ENCODE measurements at regions of chr3 and their contacts with region 1.

Region 1: GRCh38 chr3:38843898-38844297 is 27.9 kb upstream of the SCN10A start:
- DNase-seq: peak; percentile 58
- ATAC-seq: peak; percentile 72
- H3K4me3 ChIP-seq: no peak overlapping the region
- H3K27ac ChIP-seq: no peak overlapping the region
- H3K4me1 ChIP-seq: no peaks in the 10 kb centered on the region
- H3K27me3 ChIP-seq: peaks cover 58% of the 10 kb centered on the region
- CTCF ChIP-seq: peak; percentile 64

Region 2: DNA sequence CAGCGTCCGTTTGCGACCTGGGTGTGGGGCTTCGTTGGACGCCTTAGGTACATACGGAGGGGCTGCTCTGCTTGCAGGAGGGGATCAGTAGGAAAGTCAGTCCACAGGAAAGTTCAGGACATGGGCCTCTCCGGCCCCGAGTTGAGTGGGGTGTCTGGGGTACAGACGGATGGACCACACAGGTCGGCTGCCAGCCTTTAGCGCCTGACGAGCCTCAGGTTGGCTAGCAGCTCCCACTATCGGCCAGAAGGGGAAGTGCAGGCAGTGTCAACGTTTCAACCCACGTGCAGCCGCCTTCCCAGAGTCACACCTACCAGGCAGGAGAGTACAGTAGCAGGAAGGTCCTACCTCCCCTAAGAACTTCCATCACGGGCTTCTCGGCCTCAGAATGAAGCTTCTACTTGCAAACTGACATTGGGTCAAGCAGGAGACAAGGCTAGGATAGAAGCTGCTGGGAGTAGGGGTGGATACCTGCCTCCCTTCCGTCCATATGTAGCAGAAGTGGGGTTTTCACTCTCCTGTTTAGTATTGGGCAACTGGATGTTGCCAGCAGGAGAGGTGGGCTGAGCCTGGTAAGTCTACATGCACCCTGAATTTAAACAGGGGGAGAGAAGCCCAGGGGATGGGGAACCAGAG is 192.6 kb before region 1 on chr3:
- CTCF ChIA-PET with region 1: no interaction called
- POLR2A ChIA-PET with region 1: no interaction called
- intact Hi-C with region 1: loop called (anchors 2 kb)
- DNase-seq: peak; percentile 70
- ATAC-seq: peak; percentile 50
- H3K4me3 ChIP-seq: no peak overlapping the region
- H3K27ac ChIP-seq: no peak overlapping the region
- H3K4me1 ChIP-seq: peaks cover 3% of the 10 kb centered on the region; the same call in 1 of the 2 replicates
- H3K27me3 ChIP-seq: peaks cover 42% of the 10 kb centered on the region; the same call in 1 of the 2 replicates
- CTCF ChIP-seq: peak; percentile 89